Natural killer cell (primary cell): ENCODE measurements at regions of chr11 and their contacts with region 1.

Region 1: DNA sequence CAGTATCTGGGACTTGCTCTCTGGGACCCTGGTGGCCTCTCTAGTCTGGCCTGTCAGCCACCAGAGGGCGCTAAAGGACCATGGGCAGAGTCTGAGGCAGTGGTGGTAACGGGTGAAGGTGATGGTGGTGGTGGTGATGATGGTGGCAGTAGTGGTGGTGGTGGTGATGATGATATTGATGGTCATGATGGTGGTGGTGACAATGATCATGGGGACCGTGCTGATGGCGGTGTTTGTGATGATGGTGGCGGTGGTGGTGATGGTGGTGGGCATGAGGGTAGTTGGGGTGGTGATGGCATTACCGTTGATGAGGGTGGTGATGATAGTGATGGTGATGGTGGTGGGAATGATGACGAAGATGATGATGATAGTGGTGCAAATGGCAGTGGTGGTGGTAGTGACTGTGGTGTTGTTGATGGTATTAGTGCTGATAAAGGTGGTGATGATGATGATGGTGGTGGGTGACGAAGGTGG is 16.0 kb downstream of the TRPM5 start:
- DNase-seq: peak; percentile 82 to 92
- ATAC-seq: peak; percentile 75 to 90 (median 87)
- H3K4me3 ChIP-seq: no peak overlapping the region
- H3K4me3 Mint-ChIP-seq: no peak overlapping the region
- H3K27ac ChIP-seq: no peak overlapping the region
- H3K27ac Mint-ChIP-seq: no peak overlapping the region
- H3K4me1 ChIP-seq: no peaks in the 10 kb centered on the region
- H3K4me1 Mint-ChIP-seq: peaks cover 0 to 5% of the 10 kb centered on the region in 2 donors
- H3K27me3 ChIP-seq: no peaks in the 10 kb centered on the region
- H3K27me3 Mint-ChIP-seq: no peaks in the 10 kb centered on the region
- CTCF ChIP-seq: peak; percentile 70

Region 2: DNA sequence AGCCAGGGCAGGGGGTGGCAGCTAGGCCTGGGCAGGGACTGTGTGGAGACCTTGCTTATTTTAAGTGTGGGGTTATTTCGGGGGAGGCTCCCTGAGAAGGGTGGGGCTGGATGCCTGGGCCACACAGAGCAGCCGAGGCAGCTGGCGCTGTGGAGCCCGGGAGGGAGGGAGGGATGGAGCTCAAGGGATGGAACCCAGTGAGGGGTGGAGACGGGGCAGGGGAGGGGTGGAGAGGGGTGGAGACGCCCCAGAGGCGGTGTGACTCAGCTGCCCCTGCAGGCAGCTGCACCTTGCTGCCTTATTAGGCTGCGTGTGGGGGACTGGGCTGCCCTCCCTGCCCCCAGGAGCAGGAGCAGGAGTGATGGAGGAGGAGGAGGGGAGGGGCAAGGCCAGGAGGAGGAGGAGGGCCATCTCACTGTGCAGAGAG is 37.6 kb before region 1 on chr11:
- intact Hi-C with region 1: no loop called
- DNase-seq: no peak
- ATAC-seq: no peak
- H3K4me3 ChIP-seq: no peak overlapping the region
- H3K4me3 Mint-ChIP-seq: no peak overlapping the region
- H3K27ac ChIP-seq: no peak overlapping the region
- H3K27ac Mint-ChIP-seq: peak overlapping the region; percentile 30 to 38
- H3K4me1 ChIP-seq: peaks cover 94% of the 10 kb centered on the region
- H3K4me1 Mint-ChIP-seq: peaks cover 27 to 51% of the 10 kb centered on the region in 2 donors
- H3K27me3 ChIP-seq: no peaks in the 10 kb centered on the region
- H3K27me3 Mint-ChIP-seq: no peaks in the 10 kb centered on the region
- CTCF ChIP-seq: no peak

Region 3: DNA sequence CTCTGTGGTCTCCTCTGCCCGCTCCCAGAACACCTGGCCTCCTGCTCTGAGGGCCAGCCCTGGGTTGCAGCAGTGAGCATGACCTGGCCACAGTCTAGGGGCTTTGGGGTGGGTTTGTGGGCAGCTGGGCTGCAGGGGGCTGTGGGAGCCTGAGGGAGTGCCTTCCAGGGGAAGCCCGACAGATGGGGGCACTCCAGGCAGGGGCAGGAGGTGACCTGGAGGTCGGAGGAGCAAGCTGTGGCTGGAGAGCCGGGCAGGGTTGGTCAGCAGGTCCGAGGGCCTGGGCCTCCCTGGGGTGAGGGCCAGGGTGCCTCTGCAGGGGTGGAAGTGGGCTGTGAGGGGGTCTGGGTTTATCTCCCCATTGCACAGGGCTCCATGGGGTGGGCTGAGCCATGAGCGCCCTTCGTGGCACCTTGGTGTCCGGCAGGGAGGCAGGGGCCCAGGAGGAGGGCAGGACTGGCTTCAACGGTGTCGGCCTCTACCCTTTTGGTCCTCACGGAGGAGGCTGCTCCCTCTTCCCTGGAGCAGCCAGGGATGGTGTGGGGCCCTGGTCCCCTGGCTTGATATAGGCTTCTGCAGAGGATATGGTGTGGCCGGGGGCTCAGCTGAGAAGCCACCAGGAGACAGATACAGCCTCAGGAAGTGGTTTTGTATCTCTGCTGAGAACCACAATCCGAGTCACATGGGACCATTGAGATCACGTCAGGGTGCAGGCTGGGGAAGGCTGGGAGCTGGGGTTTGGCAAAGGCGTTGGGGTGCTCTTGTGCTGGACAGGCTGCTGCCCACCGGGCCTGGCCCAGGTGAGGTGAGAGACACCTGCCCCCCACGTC is 38.7 kb after region 1 on chr11:
- intact Hi-C with region 1: loop called (anchors 5 kb)
- DNase-seq: peak; percentile 51 to 84
- ATAC-seq: peak; percentile 91 to 99 (median 96)
- H3K4me3 ChIP-seq: no peak overlapping the region
- H3K4me3 Mint-ChIP-seq: peak overlapping the region; percentile 49
- H3K27ac ChIP-seq: no peak overlapping the region
- H3K27ac Mint-ChIP-seq: no peak overlapping the region
- H3K4me1 ChIP-seq: peaks cover 43% of the 10 kb centered on the region
- H3K4me1 Mint-ChIP-seq: peaks cover 19 to 36% of the 10 kb centered on the region in 2 donors
- H3K27me3 ChIP-seq: peaks cover 10% of the 10 kb centered on the region
- H3K27me3 Mint-ChIP-seq: peaks cover 26 to 39% of the 10 kb centered on the region in 2 donors
- CTCF ChIP-seq: no peak

Region 4: GRCh38 chr11:2888266-2888968 is 460.1 kb after region 1 on chr11:
- intact Hi-C with region 1: loop called (anchors 2 kb)
- DNase-seq: peak; percentile 85 to 91
- ATAC-seq: peak; percentile 32 to 45 (median 34)
- H3K4me3 ChIP-seq: no peak overlapping the region
- H3K4me3 Mint-ChIP-seq: peak overlapping the region; percentile 37
- H3K27ac ChIP-seq: no peak overlapping the region
- H3K27ac Mint-ChIP-seq: no peak overlapping the region
- H3K4me1 ChIP-seq: peaks cover 45% of the 10 kb centered on the region
- H3K4me1 Mint-ChIP-seq: peaks cover 28 to 31% of the 10 kb centered on the region in 2 donors
- H3K27me3 ChIP-seq: peaks cover 3% of the 10 kb centered on the region
- H3K27me3 Mint-ChIP-seq: peaks cover 1 to 2% of the 10 kb centered on the region in 2 donors
- CTCF ChIP-seq: peak; percentile 94